Calu3 (cell line): ENCODE measurements at regions of chr12 and their contacts with region 1.

Region 1: DNA sequence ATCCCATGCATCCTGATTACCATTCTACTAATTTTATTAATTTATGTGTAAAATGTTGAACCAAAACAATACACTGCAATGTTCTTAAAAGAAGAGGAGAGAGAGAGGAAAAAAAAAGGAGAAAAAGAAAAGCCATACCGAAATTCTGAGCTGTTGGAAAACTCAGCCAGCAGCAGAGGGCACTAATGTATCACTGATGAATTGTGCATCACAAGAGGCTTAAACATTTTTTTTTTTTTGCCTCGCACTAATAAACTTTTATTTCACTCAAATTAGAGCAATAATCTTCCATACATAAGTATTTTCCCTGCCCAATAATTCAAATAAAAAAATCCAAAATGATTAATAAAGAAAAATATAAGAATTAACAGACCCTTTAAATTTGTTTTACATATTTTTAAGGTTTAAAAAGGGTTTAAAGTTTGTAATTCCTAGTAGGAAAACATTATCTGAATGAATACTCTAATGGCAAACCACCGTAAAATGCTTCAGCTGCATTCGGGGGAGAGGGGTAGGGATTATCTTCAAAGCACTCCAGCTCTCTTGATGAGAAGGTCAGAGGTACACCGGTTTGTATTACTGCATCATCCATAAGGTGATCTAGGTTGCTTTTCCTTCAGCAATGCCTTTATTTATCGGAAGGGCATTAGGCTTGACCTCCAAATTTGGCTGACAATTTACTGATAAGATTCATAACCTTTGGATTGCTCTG is 41.9 kb downstream of the ATP23 start:
- DNase-seq: peak; percentile 67
- H3K4me3 Mint-ChIP-seq: no peak overlapping the region
- H3K27ac Mint-ChIP-seq: no peak overlapping the region
- H3K4me1 Mint-ChIP-seq: peaks cover 14% of the 10 kb centered on the region
- H3K27me3 Mint-ChIP-seq: no peaks in the 10 kb centered on the region
- CTCF ChIP-seq: peak; percentile 63

Region 2: DNA sequence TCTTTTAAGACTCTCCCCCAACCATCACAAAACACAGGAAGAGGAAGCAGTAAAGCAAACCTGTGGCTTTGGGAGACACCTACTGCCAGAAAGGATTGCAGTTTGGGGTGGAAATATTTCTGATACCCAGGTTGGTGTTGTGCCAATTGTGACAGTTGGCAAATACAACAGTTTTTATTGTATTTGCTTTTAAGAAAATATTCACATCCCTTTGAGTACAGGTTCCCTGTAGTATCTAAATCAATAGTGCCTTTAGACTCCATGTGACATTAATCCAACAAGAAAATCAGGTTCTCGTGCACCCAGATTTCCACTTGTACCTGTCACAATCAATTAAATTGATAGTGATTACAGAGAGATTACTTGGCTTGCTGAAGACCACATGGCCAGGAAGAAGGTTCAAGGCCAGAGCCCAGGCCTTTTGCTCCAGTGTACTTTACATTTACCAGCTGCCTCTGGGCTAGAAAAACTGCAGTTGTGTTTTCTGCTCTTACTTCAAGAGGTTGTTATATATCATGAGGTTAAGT is 319.2 kb after region 1 on chr12:
- CTCF ChIA-PET with region 1: no interaction called
- intact Hi-C with region 1: loop called (anchors 1 kb)
- DNase-seq: peak; percentile 66
- H3K4me3 Mint-ChIP-seq: no peak overlapping the region
- H3K27ac Mint-ChIP-seq: peak overlapping the region; percentile 64
- H3K4me1 Mint-ChIP-seq: peaks cover 27% of the 10 kb centered on the region
- H3K27me3 Mint-ChIP-seq: no peaks in the 10 kb centered on the region
- CTCF ChIP-seq: no peak

Region 3: DNA sequence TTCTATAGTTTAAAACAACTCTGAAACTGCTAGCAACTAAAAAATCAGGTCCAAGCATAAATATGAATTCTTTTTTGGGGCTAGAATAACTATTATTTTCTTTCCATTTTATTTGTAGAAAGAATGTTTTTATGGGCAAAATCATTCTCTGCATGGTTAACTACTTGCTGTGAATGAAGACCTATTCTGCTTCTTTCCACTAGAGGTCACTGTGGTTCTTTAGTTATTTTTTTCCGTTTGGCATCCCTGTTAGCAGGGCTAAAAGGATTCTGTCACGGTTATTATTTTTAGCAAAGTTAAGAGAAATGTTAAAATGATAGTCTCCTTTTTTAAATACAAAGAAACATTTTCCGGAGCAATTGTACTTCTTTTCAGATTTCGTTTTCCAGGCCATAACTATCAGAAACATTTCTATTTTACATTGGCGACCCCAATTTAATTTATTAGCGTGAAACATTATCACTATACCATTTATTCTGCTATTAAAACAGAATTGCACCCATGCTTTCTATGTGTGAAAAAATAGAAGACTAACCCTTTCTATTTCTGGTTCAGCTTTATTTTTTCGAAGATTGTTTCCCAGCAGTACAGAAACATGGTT is 362.8 kb after region 1 on chr12:
- CTCF ChIA-PET with region 1: no interaction called
- intact Hi-C with region 1: loop called (anchors 2 kb)
- DNase-seq: no peak
- H3K4me3 Mint-ChIP-seq: no peak overlapping the region
- H3K27ac Mint-ChIP-seq: no peak overlapping the region
- H3K4me1 Mint-ChIP-seq: peaks cover 13% of the 10 kb centered on the region
- H3K27me3 Mint-ChIP-seq: no peaks in the 10 kb centered on the region
- CTCF ChIP-seq: peak; percentile 43

Region 4: DNA sequence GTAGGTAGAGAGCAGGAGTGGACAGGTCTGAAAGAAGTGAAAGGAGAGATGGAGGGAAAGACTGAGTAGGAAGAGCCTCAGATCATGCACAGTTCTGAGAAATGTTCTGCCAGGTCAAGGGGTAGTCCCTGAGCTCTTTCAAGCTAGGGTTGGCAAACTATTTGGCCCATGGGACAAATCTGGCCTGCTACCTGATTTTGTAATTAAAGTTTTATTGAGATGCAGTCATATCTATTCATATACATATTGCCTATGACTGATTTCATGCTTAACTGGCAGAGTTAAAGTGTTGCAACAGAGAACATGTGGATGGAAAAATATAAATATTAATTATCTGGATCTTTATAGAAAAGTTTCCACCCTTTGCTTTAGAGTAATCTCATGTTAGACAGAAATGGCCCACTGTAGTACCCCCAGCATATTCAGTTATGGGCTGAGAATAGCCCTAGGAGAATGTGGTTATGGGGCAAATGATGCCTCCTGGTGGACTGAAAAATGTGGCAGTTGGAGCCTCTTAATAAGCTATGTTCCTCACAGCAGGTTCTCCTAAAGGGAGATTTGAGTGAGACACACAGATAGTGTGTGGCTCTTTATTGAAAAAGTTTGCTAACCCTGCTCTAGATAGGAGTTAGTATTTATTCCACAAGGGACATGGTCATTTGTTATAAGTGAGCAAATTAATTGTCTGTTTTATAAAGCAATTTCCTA is 460.1 kb after region 1 on chr12:
- CTCF ChIA-PET with region 1: interaction called, 10 read pairs
- intact Hi-C with region 1: loop called (anchors 5 kb)
- DNase-seq: peak; percentile 48
- H3K4me3 Mint-ChIP-seq: no peak overlapping the region
- H3K27ac Mint-ChIP-seq: no peak overlapping the region
- H3K4me1 Mint-ChIP-seq: no peaks in the 10 kb centered on the region
- H3K27me3 Mint-ChIP-seq: no peaks in the 10 kb centered on the region
- CTCF ChIP-seq: peak; percentile 45

Region 5: DNA sequence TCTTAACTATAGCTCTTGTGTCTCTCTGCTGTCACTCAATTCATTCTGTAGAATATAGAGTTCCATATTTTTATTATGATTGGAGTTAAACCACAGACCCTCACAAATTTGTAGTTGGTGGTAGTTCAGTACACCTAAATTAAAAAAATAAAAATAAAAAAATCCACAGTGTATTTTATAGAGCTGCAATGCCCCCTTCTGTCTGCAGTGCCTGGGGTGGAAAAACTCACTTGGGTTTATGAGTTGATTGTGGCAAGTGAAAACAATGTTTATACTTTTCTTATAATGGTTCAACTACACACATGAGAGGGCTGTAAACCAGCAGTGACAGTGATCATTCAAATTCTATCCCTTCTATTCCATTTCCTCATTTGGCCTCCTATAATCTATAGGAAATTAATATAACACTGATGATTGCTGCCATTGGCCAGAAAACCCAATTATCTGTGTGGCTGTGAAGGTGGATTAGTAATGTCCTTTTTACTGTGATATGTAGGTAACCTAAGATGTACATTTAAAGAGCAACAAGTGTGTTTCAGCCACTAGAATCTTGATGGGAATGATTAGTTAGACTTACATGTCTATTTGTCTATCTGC is 1103.9 kb after region 1 on chr12:
- CTCF ChIA-PET with region 1: no interaction called
- intact Hi-C with region 1: loop called (anchors 5 kb)
- DNase-seq: no peak
- H3K4me3 Mint-ChIP-seq: no peak overlapping the region
- H3K27ac Mint-ChIP-seq: no peak overlapping the region
- H3K4me1 Mint-ChIP-seq: peaks cover 60% of the 10 kb centered on the region
- H3K27me3 Mint-ChIP-seq: no peaks in the 10 kb centered on the region
- CTCF ChIP-seq: peak; percentile 47

Region 6: GRCh38 chr12:59149997-59150642 is 1166.8 kb after region 1 on chr12:
- CTCF ChIA-PET with region 1: no interaction called
- intact Hi-C with region 1: loop called (anchors 2 kb)
- DNase-seq: peak; percentile 53
- H3K4me3 Mint-ChIP-seq: no peak overlapping the region
- H3K27ac Mint-ChIP-seq: no peak overlapping the region
- H3K4me1 Mint-ChIP-seq: no peaks in the 10 kb centered on the region
- H3K27me3 Mint-ChIP-seq: no peaks in the 10 kb centered on the region
- CTCF ChIP-seq: peak; percentile 91